Left cardiac atrium (tissue), 4 donors: ENCODE measurements at regions of chr19 and their contacts with region 1.

Region 1: DNA sequence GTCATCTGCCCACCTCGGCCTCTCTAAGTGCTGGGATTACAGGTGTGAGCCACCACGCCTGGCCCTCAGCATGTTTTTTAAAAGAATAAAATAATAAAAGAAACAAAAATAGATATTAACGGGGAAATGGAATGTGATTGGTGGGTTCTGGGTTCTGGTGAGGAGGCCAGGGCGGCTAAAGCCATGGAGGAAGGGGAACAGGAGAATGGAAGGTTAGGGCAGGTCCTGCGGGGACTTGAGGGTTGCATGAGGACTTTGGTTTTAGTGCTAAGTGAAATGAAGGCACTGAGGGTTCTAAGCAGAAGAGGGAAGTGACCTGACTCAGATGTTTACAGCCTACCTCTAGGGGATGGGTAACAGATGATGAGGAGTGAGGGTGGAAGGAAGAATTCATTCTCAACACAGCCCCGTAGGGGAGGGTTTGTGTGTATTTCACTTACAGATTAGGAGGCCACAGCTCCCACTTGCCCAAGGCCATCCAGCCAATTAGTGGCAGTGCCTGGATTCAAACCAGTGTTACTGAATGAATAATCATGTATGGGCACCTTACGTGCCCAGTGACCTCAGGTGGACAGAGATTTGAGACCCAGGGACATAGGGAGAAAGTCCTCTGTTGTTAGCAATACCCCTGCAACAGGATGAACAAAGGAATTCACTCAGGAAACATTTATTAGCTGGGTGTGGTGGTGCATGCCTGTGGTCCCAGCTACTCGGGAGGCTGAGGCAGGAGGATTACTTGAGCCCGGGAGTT is 6.7 kb upstream of the MRPL4 start:
- DNase-seq: no peak
- ATAC-seq: no peak

Region 2: GRCh38 chr19:10194500-10195289 is 50.7 kb before region 1 on chr19 and contains the start of gene DNMT1:
- intact Hi-C with region 1: loop called in 1 of 2 experiments (anchors 10 kb)
- DNase-seq: peak; percentile 96
- ATAC-seq: peak; percentile 98 to 99
- total RNA-seq, gene DNMT1: 32.7 to 34.9 TPM